ENCODE measurements at regions of chr3 and their contacts with region 1.

Region 1: DNA sequence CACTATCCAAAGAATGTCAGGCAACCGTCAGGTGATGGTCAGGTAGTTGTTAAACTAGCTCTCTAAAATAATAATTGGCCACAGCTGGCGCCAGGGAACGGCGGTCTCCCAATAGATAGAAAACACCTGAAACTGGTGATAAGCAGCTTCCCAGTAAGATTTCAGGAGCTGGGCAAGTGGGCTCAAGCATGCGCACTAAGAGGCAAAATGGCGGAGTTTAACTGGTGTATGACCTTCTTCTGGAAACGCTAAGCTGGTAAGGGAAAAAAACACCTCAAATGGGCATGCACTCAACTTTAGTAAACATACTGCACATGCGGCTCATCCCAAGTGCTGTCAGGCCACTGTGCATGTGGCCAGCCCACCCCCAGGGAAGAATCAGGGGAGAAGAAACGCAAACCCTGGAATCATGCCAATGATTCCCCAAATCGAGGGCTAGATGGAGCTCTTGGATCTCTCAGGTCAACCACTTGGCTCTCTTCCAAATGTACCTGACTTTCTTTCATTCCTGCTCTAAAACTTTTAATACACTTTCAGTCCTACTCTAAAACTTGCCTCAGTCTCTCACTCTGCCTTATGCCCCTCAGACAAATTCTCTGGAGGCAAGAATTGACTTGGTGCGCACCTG is 195.0 kb downstream of the ZNF621 start:
- DNase-seq: peak; percentile 17
- H3K4me3 Mint-ChIP-seq: no peak overlapping the region
- H3K27ac Mint-ChIP-seq: no peak overlapping the region
- H3K4me1 Mint-ChIP-seq: no peaks in the 10 kb centered on the region
- H3K27me3 Mint-ChIP-seq: peaks cover 3% of the 10 kb centered on the region
- CTCF ChIP-seq: no peak

Region 2: DNA sequence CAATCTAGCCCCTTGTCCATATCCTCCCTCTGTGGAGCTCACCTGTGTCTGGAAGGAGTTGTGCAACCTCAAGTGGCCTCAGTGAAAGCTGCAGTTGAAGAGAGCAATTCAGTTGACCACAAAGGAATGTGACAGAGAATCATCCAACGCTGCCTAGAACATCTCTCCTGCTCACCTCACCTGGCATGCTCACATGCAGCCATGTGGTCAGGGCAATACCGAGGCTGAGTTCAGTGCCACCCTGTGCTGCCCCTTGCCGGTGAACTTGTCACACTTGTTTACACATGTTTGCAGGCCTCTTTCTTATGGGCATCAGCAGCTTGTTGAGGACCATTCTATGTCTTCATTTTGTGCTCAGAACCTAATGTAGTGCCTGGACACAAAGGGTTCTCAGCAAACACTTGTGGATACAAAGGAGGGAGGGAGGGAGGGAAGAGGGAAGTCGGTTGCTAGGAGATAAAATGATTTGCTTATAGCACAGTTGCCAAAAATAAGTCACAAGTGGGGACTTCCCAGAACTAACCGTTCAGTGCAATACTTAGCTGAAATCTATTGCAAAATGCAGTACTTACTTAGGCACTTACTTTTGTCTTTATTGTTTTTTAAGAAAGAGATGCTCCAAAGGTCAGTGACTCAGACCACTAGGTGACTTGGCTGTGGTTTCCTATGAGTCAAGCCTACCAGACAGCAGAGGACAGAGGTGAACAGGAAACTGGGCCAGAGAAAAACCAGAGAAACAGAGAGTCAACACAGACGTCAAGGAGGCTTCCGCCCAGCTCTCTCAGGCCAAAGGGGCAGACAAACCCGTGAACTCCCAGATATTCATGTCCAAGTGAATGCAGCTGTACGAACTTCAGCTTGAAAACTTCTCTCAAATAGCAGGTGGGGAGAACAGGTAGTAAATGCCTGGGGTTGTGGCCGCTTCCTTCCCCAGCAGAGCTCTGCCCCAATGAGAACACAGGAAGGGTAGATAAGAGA is 251.7 kb after region 1 on chr3:
- CTCF ChIA-PET with region 1: interaction called, 5 read pairs
- intact Hi-C with region 1: loop called (anchors 1 kb)
- DNase-seq: peak; percentile 63
- H3K4me3 Mint-ChIP-seq: no peak overlapping the region
- H3K27ac Mint-ChIP-seq: peak overlapping the region; percentile 91
- H3K4me1 Mint-ChIP-seq: peaks cover 19% of the 10 kb centered on the region
- H3K27me3 Mint-ChIP-seq: no peaks in the 10 kb centered on the region
- CTCF ChIP-seq: no peak

Region 3: GRCh38 chr3:41872157-41872556 is 1152.4 kb after region 1 on chr3:
- CTCF ChIA-PET with region 1: no interaction called
- intact Hi-C with region 1: loop called (anchors 10 kb)
- DNase-seq: no peak
- H3K4me3 Mint-ChIP-seq: no peak overlapping the region
- H3K27ac Mint-ChIP-seq: no peak overlapping the region
- H3K4me1 Mint-ChIP-seq: no peaks in the 10 kb centered on the region
- H3K27me3 Mint-ChIP-seq: no peaks in the 10 kb centered on the region
- CTCF ChIP-seq: no peak